Right ventricle myocardium inferior (tissue), 1 donor: ENCODE measurements at regions of chr17 and their contacts with region 1.

Region 1: DNA sequence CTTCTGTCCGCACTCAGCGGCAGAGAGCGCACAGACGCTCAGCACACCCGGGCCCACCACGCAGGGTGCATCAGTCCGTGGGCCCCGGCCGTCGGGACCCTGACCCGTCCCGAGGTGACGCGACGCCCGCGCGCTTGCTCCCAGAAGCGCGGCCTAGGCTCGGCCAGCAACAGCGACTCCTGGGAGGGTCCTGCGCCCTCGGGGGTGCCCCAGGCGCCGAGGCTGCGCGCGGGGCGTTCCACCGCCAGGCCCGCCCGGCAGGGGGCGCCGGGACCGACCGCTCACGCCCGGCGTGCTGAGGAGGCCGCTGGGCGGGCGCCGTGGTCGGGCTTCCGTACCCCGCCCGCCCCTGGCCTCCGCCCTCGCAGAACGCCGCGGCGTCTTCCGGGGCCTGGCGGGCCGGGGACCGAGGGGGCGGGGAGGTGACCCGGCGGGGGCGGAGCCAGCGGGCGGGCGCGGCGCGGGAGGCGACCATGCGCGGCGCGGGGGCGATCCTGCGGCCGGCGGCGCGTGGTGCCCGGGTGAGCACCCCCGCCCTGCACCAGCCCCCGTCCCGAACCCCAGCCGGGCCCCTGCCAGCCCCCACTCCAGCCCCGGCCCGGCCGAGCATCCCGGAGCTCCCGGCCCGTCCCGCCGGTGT is at the start of gene CISD3:
- DNase-seq: peak; percentile 95
- ATAC-seq: peak; percentile 90
- total RNA-seq, gene CISD3: 84.7 TPM

Region 2: DNA sequence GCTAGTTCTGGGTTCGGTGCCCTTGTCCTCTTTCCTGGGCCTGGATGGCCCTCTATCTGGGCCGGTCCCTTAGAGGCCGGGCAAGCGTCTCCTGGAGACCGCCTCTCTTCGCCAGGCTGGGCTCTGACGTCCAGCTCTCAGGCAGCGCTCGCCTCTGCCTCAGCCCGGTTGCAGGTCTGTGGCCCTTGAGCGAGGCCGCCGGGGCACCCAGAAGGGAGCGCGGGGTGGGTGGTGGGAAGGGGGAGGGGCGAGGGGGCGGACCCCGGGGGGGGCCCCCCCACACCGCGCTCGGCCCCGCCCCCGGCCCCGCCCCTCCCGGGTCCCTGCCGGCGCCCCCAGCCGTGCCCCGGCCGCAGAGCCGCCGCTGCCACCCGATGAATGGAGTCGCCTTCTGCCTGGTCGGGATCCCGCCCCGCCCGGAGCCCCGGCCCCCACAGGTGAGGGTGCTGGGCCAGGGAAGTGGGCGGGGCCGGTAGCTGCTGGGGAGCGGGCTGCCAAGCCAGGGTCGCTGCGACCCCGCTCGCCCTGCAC is 301.8 kb before region 1 on chr17 and contains the start of gene ARHGAP23:
- intact Hi-C with region 1: loop called (anchors 10 kb)
- DNase-seq: peak; percentile 85
- ATAC-seq: peak; percentile 73
- total RNA-seq, gene ARHGAP23: 67.5 TPM

Region 3: GRCh38 chr17:38676706-38677504 is 53.1 kb before region 1 on chr17:
- intact Hi-C with region 1: loop called (anchors 1 kb)
- DNase-seq: peak; percentile 86
- ATAC-seq: peak; percentile 78

Region 4: GRCh38 chr17:38693700-38694329 is 36.2 kb before region 1 on chr17:
- intact Hi-C with region 1: loop called (anchors 5 kb)
- DNase-seq: peak; percentile 93
- ATAC-seq: peak; percentile 99

Region 5: DNA sequence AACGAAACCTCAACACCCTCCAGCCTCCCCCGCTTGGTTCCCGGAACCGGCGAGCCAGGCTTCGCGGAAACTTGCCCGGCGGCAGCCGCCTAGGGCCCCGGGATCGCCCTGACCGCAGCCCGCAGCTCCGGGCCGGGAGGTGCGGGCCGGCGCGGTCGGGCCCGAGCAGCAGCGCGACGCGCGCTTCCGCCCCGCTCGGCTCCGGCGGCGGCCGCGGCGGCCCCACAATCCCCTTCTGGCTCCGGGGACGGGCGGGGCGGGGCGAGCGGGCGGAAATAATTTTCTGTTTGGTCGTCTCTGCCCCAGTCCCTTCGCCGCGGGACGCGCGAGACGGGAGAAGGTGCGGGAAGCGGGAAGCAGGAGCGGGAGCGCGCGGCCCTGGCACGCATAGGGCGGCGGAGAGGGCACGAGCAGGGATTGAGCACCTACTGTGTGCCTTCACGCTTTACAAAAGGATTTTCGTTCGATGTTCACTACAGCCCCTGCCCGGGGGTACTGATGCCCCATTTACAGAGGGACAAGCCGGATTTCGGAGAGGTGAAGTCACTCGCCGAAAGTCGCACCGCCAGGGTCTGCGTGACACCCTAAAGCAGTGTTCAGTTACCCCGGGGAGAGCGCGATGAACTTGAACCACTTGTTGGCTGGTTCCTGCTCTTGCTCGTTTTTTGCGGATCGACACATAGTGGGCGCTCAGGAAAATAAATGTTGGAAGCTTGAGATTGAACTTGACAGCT is 27.7 kb before region 1 on chr17:
- intact Hi-C with region 1: loop called (anchors 1 kb)
- DNase-seq: peak; percentile 92
- ATAC-seq: peak; percentile 67

Region 6: GRCh38 chr17:38752119-38752929 is 22.3 kb after region 1 on chr17 and contains the start of gene PSMB3:
- intact Hi-C with region 1: loop called (anchors 2 kb)
- DNase-seq: peak; percentile 97
- ATAC-seq: peak; percentile 86
- total RNA-seq, gene PSMB3: 175 TPM